ENCODE measurements at regions of chr17 and their contacts with region 1.

Region 1: GRCh38 chr17:40362696-40363110 is 1.8 kb downstream of the GJD3 start:
- DNase-seq: peak; percentile 88

Region 2: GRCh38 chr17:40303009-40303657 is 59.6 kb before region 1 on chr17:
- in situ Hi-C with region 1: loop called (anchors 5 kb)
- DNase-seq: peak; percentile 64

Region 3: GRCh38 chr17:40443583-40444327 is 81.1 kb after region 1 on chr17:
- in situ Hi-C with region 1: no loop called
- DNase-seq: peak; percentile 77

Region 4: DNA sequence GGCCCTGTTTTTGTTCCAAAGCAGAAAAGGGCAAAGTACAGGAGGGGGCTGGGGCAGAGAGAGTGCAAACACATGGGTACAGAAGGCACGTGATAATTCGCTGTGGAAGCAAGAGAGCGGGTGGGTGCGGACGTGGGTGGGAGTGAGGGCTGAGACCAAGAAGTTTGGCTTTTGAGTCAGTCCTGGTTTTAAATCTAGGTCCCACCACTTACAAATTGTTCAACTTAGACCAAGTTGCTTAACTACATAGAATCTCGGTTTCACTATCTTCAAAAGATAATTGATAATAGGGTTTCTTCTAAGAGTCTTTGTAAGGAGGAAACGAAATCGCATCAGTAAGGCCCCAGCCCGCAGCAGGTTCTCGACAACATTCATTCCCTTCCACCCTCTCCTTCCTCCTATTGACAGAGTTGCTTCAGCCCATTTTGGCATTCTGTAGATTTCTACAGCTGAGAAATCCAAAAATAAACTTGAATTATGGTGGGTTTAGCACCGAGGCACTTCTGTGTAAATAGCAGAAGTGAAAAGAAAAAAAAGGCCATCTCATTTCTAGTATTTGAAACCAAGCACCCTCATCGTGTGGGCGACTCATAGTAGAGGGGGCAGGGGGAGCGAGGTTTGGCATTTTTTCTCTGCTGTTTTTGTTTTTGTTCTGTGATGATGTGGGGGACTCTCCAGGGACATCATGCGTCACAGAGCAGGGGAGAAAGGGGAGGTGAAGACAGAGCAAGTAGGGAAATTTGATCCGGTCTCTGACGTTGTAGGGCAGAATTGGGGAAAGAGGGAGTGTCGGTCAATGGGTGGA is 236.2 kb after region 1 on chr17:
- in situ Hi-C with region 1: no loop called
- DNase-seq: no peak